Activated B cell treated with CpG ODN at 0.5 μM for 24 hours (primary cell): ENCODE measurements at regions of chr22 and their contacts with region 1.

Region 1: GRCh38 chr22:38733329-38733723 is 22.5 kb downstream of the SUN2 start:
- DNase-seq: no peak
- ATAC-seq: peak; percentile 76
- H3K4me3 Mint-ChIP-seq: no peak overlapping the region
- H3K27ac Mint-ChIP-seq: peak overlapping the region; percentile 75
- H3K4me1 Mint-ChIP-seq: peaks cover 26% of the 10 kb centered on the region
- H3K27me3 Mint-ChIP-seq: no peaks in the 10 kb centered on the region
- CTCF ChIP-seq: peak; percentile 58

Region 2: GRCh38 chr22:38696606-38697424 is 36.5 kb before region 1 on chr22:
- CTCF ChIA-PET with region 1: no interaction called
- POLR2A ChIA-PET with region 1: no interaction called
- intact Hi-C with region 1: no loop called
- DNase-seq: no peak
- ATAC-seq: no peak
- H3K4me3 Mint-ChIP-seq: no peak overlapping the region
- H3K27ac Mint-ChIP-seq: peak overlapping the region; percentile 27
- H3K4me1 Mint-ChIP-seq: peaks cover 68% of the 10 kb centered on the region
- H3K27me3 Mint-ChIP-seq: no peaks in the 10 kb centered on the region
- CTCF ChIP-seq: no peak

Region 3: DNA sequence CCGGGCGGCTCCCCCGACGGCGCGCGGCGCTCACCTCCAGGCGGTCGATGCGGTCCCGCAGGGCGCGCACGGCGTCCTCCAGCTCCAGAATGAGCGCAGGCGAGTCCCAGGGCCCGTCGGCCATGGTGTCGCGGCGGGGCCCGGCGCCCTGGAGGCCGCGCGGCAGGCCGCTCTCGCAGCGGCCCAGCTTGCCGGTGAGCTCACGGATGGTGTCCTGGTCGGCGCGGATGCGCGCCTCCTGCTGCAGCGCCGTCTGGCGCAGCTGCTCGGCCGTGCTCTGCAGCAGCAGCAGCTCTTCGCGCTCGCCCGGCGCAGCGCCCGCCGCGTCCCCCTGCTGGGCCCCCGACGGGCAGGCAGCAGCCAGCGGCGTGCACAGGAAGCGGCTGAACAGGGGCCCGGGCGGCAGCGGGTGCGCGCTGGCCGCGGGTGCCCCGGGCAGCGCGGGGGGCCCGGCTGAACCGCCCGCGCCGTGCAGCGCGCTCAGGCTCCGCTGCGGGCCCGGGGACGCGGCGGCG is 109.9 kb after region 1 on chr22:
- CTCF ChIA-PET with region 1: interaction called, 8 read pairs
- POLR2A ChIA-PET with region 1: no interaction called
- intact Hi-C with region 1: loop called (anchors 2 kb)
- DNase-seq: peak; percentile 51
- ATAC-seq: peak; percentile 75
- H3K4me3 Mint-ChIP-seq: no peak overlapping the region
- H3K27ac Mint-ChIP-seq: no peak overlapping the region
- H3K4me1 Mint-ChIP-seq: peaks cover 13% of the 10 kb centered on the region
- H3K27me3 Mint-ChIP-seq: peaks cover 56% of the 10 kb centered on the region
- CTCF ChIP-seq: no peak